Calu3 (cell line): ENCODE measurements at regions of chr11 and their contacts with region 1.

Region 1: DNA sequence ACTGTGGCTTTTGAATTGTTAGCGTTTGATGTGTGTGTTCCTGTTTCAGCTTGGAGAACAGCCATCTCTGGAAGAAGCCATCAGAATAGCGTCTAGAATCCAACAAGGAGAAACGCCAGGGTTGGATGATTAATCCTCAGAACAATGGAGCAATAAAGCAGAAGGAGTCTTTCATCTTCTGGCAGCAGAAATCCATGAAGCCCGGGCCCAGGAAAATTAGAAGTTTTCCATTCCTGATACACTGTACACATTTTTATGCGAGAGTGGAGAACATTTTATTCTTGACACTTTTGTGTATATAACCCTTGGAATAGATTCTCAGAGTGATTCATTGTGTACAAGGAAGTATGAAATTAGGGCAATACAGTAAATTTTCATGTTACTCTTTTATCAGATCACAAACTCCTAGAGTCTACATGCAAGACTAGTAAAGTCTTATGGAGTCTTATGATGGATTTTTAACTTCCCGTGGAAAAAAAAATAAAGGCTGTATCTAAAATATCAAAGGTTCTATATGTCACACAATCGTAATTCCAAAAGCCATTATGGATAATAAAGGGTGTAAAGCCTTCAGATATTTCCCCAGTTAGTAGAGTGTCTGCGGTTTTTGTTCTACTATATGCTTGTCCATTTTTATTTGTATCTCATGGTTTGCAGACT is 45.9 kb upstream of the WEE1 start:
- DNase-seq: no peak
- H3K4me3 Mint-ChIP-seq: peak overlapping the region; percentile 45
- H3K27ac Mint-ChIP-seq: peak overlapping the region; percentile 68
- H3K4me1 Mint-ChIP-seq: peaks cover 35% of the 10 kb centered on the region
- H3K27me3 Mint-ChIP-seq: no peaks in the 10 kb centered on the region
- CTCF ChIP-seq: no peak

Region 2: DNA sequence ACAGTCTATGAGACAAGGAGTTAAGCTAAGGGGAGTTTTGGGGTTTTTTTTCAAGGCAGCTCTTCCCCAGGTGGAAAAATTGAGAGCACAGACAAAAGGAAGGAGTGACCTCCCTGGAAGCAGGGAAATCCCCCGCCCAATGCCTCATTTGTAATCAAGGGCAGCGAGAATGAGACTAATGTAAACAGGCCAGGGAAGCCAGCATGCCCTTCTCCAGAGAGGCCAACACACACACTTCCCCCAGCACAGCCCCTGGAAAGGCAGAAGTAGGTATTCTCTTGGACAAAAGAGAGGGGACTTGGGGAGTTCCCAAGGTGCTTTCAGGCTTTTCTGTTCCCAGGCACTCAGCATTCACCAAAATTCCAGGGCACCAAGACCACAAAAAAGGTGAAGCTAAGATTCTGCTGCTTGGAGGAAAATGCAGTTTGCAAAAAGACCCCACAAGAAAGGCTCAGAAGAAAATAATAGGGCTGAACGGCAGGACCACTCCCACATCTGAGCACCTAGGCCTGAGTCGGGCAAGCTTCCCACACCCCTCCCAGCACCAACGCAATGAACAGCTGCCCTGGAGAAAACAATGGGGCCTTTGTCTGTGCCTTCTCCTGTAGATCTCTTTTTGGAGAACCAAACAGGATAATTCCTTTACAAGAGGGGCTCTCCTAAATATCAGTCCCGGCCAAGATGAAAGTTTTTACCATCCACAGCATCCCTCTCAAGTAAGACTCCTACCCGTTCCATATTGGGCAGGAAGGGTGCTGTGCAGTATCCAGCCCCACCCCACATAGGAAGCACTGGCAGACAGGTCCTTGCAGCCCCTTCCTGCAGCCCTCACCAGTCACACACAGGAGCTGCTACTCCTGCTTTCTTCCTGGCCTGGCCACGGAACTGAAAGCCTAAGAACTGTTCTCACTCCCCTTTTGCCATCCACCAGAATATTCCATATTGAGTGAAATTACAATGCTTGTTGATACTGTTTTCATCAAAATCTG is 687.4 kb before region 1 on chr11:
- CTCF ChIA-PET with region 1: no interaction called
- intact Hi-C with region 1: no loop called
- DNase-seq: peak; percentile 67
- H3K4me3 Mint-ChIP-seq: peak overlapping the region; percentile 43
- H3K27ac Mint-ChIP-seq: peak overlapping the region; percentile 94
- H3K4me1 Mint-ChIP-seq: peaks cover 37% of the 10 kb centered on the region
- H3K27me3 Mint-ChIP-seq: no peaks in the 10 kb centered on the region
- CTCF ChIP-seq: no peak

Region 3: GRCh38 chr11:9498457-9499078 is 29.0 kb before region 1 on chr11:
- CTCF ChIA-PET with region 1: no interaction called
- intact Hi-C with region 1: no loop called
- DNase-seq: no peak
- H3K4me3 Mint-ChIP-seq: no peak overlapping the region
- H3K27ac Mint-ChIP-seq: no peak overlapping the region
- H3K4me1 Mint-ChIP-seq: peaks cover 8% of the 10 kb centered on the region
- H3K27me3 Mint-ChIP-seq: no peaks in the 10 kb centered on the region
- CTCF ChIP-seq: no peak

Region 4: GRCh38 chr11:9575260-9576240 is 47.9 kb after region 1 on chr11:
- CTCF ChIA-PET with region 1: interaction called, 3 read pairs
- intact Hi-C with region 1: loop called (anchors 5 kb)
- DNase-seq: peak; percentile 76
- H3K4me3 Mint-ChIP-seq: peak overlapping the region; percentile 87
- H3K27ac Mint-ChIP-seq: peak overlapping the region; percentile 95
- H3K4me1 Mint-ChIP-seq: peaks cover 45% of the 10 kb centered on the region
- H3K27me3 Mint-ChIP-seq: no peaks in the 10 kb centered on the region
- CTCF ChIP-seq: no peak